CD8-positive, alpha-beta T cell (primary cell): ENCODE measurements at regions of chr22 and their contacts with region 1.

Region 1: DNA sequence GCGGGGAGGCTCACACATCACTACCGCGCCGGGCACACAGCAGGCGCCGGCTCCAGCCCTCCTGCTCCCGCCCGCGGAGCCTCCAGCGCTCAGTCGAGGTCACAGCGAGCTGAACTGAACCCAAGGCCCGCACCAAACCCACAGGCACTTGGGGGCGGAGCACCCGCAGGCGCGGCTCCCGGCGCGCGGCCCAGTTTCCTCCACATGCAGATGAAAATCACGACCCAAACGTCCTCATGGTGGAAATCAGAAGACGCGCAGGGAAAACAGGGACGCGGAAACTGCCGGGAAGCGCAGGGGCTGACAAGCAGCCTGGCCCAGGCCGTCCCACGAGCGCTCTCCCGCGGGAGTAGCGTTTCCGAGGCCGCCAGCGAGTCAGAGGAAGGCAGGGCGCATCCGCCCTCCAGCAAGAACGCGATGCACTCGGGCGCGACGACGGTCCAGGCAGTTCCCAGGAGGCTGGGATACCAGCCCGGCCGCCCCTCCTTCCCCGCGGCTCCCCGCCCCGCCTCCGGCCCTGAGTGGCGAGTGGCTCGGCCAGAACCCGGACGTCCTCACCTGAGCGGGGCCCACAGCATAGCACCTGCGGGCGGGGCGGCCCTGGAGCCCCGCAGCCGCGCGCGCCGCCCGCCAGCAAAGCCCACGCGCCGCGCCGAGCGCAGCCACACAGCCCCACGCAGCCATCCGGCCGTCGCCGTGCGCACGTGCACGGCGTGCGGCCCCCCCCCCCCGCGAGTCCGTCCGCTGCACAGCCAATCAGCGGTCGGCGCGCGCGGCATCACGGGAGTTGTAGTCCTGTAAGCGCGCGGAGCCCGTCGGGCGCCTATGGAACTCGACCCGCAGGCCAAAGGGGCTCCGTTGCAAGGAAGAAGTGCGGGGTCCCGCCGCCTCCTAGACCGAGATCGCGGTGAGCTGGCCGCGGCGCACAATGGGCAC is at the start of gene HDHD5:
- DNase-seq: peak; percentile 78 to 93 (median 90)
- ATAC-seq: peak; percentile 92
- H3K4me3 ChIP-seq: peak within 1 kb of the TSS; percentile 80 to 89
- H3K4me3 Mint-ChIP-seq: peak within 1 kb of the TSS; percentile 86
- H3K27ac ChIP-seq: peak within 1 kb of the TSS; percentile 56 to 64
- H3K27ac Mint-ChIP-seq: peak within 1 kb of the TSS; percentile 55
- H3K4me1 ChIP-seq: peaks cover 27% of the 10 kb centered on the region
- H3K4me1 Mint-ChIP-seq: peaks cover 36% of the 10 kb centered on the region
- H3K27me3 ChIP-seq: no peaks in the 10 kb centered on the region
- H3K27me3 Mint-ChIP-seq: no peaks in the 10 kb centered on the region
- CTCF ChIP-seq: no peak
- total RNA-seq, gene HDHD5: 9.2 to 11.0 TPM

Region 2: GRCh38 chr22:17121227-17122195 is 37.3 kb before region 1 on chr22 and contains the start of gene TMEM121B:
- CTCF ChIA-PET with region 1: no interaction called
- POLR2A ChIA-PET with region 1: interaction called, 5 read pairs
- intact Hi-C with region 1: loop called in 1 of 2 experiments (anchors 2 kb)
- DNase-seq: peak in 2 of 9 experiments; percentile 14 to 29
- ATAC-seq: no peak
- H3K4me3 ChIP-seq: no peak within 1 kb of the TSS
- H3K4me3 Mint-ChIP-seq: peak within 1 kb of the TSS; percentile 69
- H3K27ac ChIP-seq: no peak within 1 kb of the TSS
- H3K27ac Mint-ChIP-seq: no peak within 1 kb of the TSS
- H3K4me1 ChIP-seq: peaks cover 44% of the 10 kb centered on the region
- H3K4me1 Mint-ChIP-seq: peaks cover 29% of the 10 kb centered on the region
- H3K27me3 ChIP-seq: peaks cover 11% of the 10 kb centered on the region in 2 experiments
- H3K27me3 Mint-ChIP-seq: peaks cover 10% of the 10 kb centered on the region
- CTCF ChIP-seq: no peak
- total RNA-seq, gene TMEM121B: 0.11 TPM in 1 of 2 experiments, not detected in the other

Region 3: DNA sequence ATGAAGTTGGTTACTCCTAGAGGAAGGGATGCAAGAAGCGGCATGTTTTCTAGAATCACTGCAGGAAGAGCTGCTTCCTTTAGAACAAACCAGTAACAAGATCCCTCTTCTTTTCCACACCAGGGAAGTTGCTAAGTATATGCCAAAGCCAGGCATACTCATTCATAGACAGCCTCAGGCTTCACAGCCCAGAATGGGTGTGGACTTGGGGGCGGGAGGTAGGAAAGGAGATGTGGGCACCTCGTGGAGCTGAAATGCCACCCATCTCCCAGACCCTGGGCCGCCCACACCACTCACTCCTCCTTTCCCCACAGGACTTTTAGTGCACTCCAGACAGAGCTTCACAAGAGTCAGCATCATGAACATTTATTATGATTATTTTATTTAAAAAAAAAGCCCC is 21.7 kb before region 1 on chr22:
- CTCF ChIA-PET with region 1: no interaction called
- POLR2A ChIA-PET with region 1: no interaction called
- intact Hi-C with region 1: no loop called
- DNase-seq: no peak
- ATAC-seq: no peak
- H3K4me3 ChIP-seq: no peak overlapping the region
- H3K4me3 Mint-ChIP-seq: no peak overlapping the region
- H3K27ac ChIP-seq: no peak overlapping the region
- H3K27ac Mint-ChIP-seq: no peak overlapping the region
- H3K4me1 ChIP-seq: no peaks in the 10 kb centered on the region
- H3K4me1 Mint-ChIP-seq: no peaks in the 10 kb centered on the region
- H3K27me3 ChIP-seq: no peaks in the 10 kb centered on the region
- H3K27me3 Mint-ChIP-seq: no peaks in the 10 kb centered on the region
- CTCF ChIP-seq: no peak

Region 4: DNA sequence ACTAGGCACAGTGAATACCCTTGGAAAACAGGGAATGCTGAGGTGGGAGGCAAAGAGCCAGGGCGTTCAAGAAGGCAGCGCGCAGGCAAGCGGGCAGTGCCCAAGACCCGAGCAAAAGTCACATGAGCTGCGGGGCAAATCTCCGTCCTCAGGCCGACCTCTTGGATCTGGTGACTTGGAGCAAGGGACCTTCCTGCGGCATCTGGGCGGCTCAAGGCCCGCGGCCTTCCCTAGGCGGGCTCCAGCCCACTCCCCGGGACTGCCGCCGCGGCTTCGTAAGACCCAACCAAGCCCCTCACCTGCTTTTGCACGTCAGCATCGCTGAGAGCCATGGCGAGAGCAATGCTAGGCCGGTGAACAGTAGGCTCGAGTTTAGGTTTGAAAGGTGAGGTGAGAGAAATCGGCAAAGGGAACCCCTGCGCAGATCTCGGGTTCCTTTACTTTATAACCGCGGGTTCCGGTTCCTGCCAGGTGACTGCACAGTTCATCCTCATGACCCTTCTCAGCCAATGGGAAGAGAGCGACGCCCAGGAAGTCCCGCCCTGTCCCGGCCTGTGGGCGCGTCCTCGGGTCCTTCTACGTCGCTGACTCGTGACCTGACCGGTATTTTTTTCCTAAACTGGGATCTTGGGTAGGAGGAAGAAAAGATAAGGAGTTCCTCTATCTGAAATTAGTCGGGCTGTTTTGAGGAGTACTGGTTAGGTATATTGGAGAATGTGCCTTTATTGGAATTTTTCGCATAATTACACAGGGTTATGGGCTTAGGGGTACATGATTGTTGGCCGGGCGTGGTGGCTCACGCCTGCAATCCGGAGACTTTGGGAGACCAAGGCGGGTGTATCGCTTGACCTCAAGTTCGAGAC is 469.7 kb after region 1 on chr22 and contains the start of gene ATP6V1E1:
- CTCF ChIA-PET with region 1: no interaction called
- POLR2A ChIA-PET with region 1: no interaction called
- intact Hi-C with region 1: loop called in 1 of 2 experiments (anchors 2 kb)
- DNase-seq: peak; percentile 90 to 97 (median 94)
- ATAC-seq: peak; percentile 100
- H3K4me3 ChIP-seq: peak within 1 kb of the TSS; percentile 84 to 100
- H3K4me3 Mint-ChIP-seq: peak within 1 kb of the TSS; percentile 97
- H3K27ac ChIP-seq: peak within 1 kb of the TSS; percentile 93 to 94
- H3K27ac Mint-ChIP-seq: peak within 1 kb of the TSS; percentile 99
- H3K4me1 ChIP-seq: peaks cover 23% of the 10 kb centered on the region
- H3K4me1 Mint-ChIP-seq: peaks cover 33% of the 10 kb centered on the region
- H3K27me3 ChIP-seq: no peaks in the 10 kb centered on the region
- H3K27me3 Mint-ChIP-seq: no peaks in the 10 kb centered on the region
- CTCF ChIP-seq: no peak
- total RNA-seq, gene ATP6V1E1: 49.8 to 53.0 TPM

Region 5: DNA sequence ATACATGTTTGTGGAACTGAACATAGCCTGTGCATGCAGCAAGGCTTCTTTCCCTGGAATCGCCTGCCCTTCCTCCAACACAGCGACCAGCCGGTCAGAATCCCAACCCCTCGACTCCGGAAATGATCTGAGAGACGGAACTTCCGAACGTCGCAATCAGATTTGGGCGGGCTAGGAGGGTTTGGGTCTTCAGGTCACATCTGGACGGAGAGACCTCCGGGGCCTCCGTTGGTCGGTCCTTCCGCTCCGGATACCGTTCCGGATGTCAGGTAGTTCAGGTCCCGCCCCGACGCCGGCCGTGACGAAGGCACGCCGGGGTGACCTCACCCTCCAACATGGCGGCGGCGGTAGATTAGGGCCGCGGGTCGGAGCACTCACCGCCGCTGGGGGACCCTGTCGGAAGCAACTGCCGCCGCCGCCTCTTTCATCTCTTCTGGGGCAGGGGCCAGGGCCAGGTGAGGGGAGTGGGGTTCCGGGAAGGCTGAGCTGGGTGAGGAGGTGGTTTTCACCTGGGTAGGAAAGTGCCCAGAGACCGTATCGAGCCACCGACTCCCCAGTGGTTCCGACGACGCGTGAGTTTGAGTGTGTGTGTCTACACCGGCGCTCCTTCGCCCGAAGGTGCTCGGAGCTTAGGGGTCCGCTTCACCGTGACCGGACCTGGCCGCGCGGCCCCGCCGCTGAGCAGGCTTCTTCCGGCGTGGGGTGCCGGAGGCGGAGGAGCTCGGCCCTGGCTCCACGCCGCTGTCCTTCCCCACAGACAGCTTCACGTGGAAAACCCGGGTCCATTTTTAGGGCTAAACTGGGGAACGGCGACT is 479.8 kb after region 1 on chr22 and contains the start of gene BCL2L13:
- CTCF ChIA-PET with region 1: no interaction called
- POLR2A ChIA-PET with region 1: no interaction called
- intact Hi-C with region 1: loop called in 1 of 2 experiments (anchors 5 kb)
- DNase-seq: peak; percentile 73 to 93 (median 89)
- ATAC-seq: peak; percentile 92
- H3K4me3 ChIP-seq: peak within 1 kb of the TSS; percentile 67 to 90
- H3K4me3 Mint-ChIP-seq: peak within 1 kb of the TSS; percentile 92
- H3K27ac ChIP-seq: peak within 1 kb of the TSS; percentile 98 to 99
- H3K27ac Mint-ChIP-seq: peak within 1 kb of the TSS; percentile 98
- H3K4me1 ChIP-seq: peaks cover 21% of the 10 kb centered on the region
- H3K4me1 Mint-ChIP-seq: peaks cover 29% of the 10 kb centered on the region
- H3K27me3 ChIP-seq: no peaks in the 10 kb centered on the region
- H3K27me3 Mint-ChIP-seq: no peaks in the 10 kb centered on the region
- CTCF ChIP-seq: no peak
- total RNA-seq, gene BCL2L13: 7.8 to 9.5 TPM